ENCODE measurements at regions of chr6 and their contacts with region 1.

Region 1: GRCh38 chr6:139375232-139376016 is 976 bp upstream of the CITED2 start:
- DNase-seq: peak; percentile 71 to 93 (median 83)
- ATAC-seq: peak; percentile 63
- H3K4me3 ChIP-seq: peak overlapping the region; percentile 92 to 93
- H3K4me3 Mint-ChIP-seq: peak overlapping the region; percentile 98
- H3K27ac ChIP-seq: peak overlapping the region; percentile 76 to 94
- H3K27ac Mint-ChIP-seq: peak overlapping the region; percentile 95
- H3K4me1 ChIP-seq: peaks cover 22% of the 10 kb centered on the region
- H3K4me1 Mint-ChIP-seq: peaks cover 26% of the 10 kb centered on the region
- H3K27me3 ChIP-seq: no peaks in the 10 kb centered on the region
- H3K27me3 Mint-ChIP-seq: no peaks in the 10 kb centered on the region
- CTCF ChIP-seq: no peak

Region 2: DNA sequence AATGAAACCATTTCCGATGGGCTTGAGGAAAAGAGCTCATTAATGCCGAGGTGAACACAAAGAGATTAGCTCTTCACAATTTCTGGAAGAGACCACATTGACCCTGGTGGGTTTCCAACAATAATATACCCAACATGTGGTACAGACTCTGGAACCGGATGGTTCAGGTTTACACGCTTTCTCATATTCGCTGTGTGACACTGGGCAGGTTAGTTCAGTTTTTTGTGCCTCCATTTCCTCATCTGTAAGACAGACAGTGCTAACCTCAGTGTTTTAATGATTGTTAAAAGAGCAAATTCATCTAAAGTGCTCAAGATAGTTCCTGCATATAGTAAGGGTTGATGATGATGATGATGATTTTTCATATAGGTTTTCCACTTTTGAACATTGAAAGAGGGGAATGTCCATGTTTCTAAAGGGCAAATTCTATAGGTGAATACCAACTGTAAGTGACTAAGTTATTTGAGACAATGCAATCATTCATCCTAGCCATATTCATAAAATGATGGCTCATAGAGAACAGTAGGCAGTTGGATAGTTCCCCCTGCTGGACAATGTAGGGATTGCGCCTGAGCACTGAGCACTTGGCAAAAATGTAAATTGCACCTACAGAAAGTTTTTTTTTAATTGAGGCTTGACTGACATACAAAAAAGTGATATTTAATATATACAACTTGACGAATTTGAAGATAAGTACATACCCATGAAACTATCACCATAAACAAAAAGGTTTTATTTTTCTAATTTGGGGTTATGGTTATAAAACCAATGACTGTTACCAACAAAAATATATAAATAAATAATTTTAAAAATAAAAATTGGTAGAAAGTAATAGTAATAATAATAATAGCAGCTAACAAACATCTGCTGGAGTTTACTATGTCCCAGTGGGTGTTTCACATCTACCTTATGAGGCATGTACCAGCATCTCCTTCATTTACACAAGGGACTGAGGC is 1266.1 kb before region 1 on chr6:
- CTCF ChIA-PET with region 1: no interaction called
- POLR2A ChIA-PET with region 1: no interaction called
- intact Hi-C with region 1: loop called in 1 of 2 experiments (anchors 10 kb)
- DNase-seq: peak; percentile 61 to 85 (median 81)
- ATAC-seq: peak; percentile 71
- H3K4me3 ChIP-seq: no peak overlapping the region
- H3K4me3 Mint-ChIP-seq: no peak overlapping the region
- H3K27ac ChIP-seq: no peak overlapping the region
- H3K27ac Mint-ChIP-seq: no peak overlapping the region
- H3K4me1 ChIP-seq: peaks cover 9% of the 10 kb centered on the region
- H3K4me1 Mint-ChIP-seq: peaks cover 18% of the 10 kb centered on the region
- H3K27me3 ChIP-seq: peaks cover 5 to 7% of the 10 kb centered on the region in 2 experiments
- H3K27me3 Mint-ChIP-seq: peaks cover 25% of the 10 kb centered on the region
- CTCF ChIP-seq: peak; percentile 92

Region 3: GRCh38 chr6:139028658-139029469 is 346.6 kb before region 1 on chr6 and contains the start of gene ABRACL:
- CTCF ChIA-PET with region 1: interaction called, 3 read pairs
- POLR2A ChIA-PET with region 1: interaction called, 13 read pairs
- intact Hi-C with region 1: loop called (anchors 1 to 2 kb)
- DNase-seq: peak; percentile 38 to 89 (median 74)
- ATAC-seq: peak; percentile 88
- H3K4me3 ChIP-seq: peak within 1 kb of the TSS; percentile 93 to 99
- H3K4me3 Mint-ChIP-seq: no peak within 1 kb of the TSS
- H3K27ac ChIP-seq: peak within 1 kb of the TSS; percentile 86 to 90
- H3K27ac Mint-ChIP-seq: peak within 1 kb of the TSS; percentile 96
- H3K4me1 ChIP-seq: peaks cover 24% of the 10 kb centered on the region
- H3K4me1 Mint-ChIP-seq: peaks cover 31% of the 10 kb centered on the region
- H3K27me3 ChIP-seq: no peaks in the 10 kb centered on the region
- H3K27me3 Mint-ChIP-seq: no peaks in the 10 kb centered on the region
- CTCF ChIP-seq: no peak
- total RNA-seq, gene ABRACL: 30.4 to 30.5 TPM

Region 4: DNA sequence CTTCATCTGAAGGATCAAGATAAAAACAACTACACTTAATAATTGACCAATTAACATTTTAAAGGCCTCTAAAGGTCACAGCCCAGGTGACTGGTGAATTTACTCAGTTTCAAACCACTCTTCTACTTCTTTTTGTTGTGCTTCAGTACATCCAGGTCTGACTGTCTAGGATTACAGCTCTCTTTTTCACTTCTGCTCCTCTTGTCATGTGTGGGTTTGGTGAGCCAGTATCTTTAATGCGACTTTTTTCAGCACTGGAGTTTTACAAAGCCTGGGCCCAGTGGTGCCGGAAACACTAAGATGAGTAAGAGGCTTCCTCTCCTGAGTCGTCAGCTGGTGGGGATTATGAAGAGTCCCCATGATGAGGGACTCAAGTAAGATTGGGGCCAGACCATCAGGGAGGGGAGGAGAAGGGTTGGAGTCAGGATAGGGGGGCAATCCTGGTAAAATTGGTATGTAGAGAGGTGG is 213.6 kb before region 1 on chr6:
- CTCF ChIA-PET with region 1: interaction called, 3 read pairs
- POLR2A ChIA-PET with region 1: interaction called, 13 read pairs
- intact Hi-C with region 1: loop called in 1 of 2 experiments (anchors 1 kb)
- DNase-seq: peak in 8 of 9 experiments; percentile 48 to 85 (median 71)
- ATAC-seq: peak; percentile 60
- H3K4me3 ChIP-seq: peak overlapping the region in 1 of 2 experiments; percentile 1
- H3K4me3 Mint-ChIP-seq: peak overlapping the region; percentile 70
- H3K27ac ChIP-seq: peak overlapping the region; percentile 52 to 68
- H3K27ac Mint-ChIP-seq: peak overlapping the region; percentile 93
- H3K4me1 ChIP-seq: peaks cover 86% of the 10 kb centered on the region
- H3K4me1 Mint-ChIP-seq: peaks cover 92% of the 10 kb centered on the region
- H3K27me3 ChIP-seq: no peaks in the 10 kb centered on the region
- H3K27me3 Mint-ChIP-seq: no peaks in the 10 kb centered on the region
- CTCF ChIP-seq: no peak

Region 5: DNA sequence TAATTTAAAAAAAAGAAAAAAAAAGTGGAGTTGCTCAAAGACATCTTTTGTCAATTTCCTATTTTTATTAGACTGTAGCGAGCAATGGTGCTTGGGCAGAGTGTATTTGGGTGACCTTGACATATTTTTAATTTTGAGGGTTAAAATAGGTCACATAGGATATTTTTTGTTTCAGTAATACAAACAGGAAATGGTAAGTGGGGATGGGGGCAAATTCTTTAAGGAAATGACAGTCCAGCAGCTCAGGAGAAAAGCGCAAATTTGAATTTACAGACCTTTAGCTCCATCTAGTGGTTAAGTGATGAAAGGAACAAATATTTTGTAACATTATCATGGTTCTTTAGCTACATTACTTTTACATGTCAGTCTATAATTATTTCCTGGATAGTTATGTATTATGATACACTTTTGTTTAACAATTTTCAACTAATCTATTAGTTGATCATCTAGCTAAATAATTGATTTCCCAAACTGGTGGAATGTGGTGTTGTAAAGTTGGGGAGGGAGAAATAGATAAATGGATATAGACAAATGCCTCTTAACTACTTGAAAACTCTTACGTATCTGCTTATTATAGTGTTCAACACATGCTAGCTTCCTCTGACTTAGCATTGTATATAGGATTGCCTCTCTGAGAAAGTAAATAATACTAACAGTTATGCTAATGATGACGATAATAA is 11.0 kb before region 1 on chr6:
- CTCF ChIA-PET with region 1: interaction called, 31 read pairs
- POLR2A ChIA-PET with region 1: interaction called, 13 read pairs
- intact Hi-C with region 1: no loop called
- DNase-seq: peak in 2 of 9 experiments; percentile 64 to 74
- ATAC-seq: peak; percentile 63
- H3K4me3 ChIP-seq: no peak overlapping the region
- H3K4me3 Mint-ChIP-seq: no peak overlapping the region
- H3K27ac ChIP-seq: no peak overlapping the region
- H3K27ac Mint-ChIP-seq: no peak overlapping the region
- H3K4me1 ChIP-seq: peaks cover 4% of the 10 kb centered on the region
- H3K4me1 Mint-ChIP-seq: peaks cover 46% of the 10 kb centered on the region
- H3K27me3 ChIP-seq: no peaks in the 10 kb centered on the region
- H3K27me3 Mint-ChIP-seq: no peaks in the 10 kb centered on the region
- CTCF ChIP-seq: peak; percentile 97

Region 6: GRCh38 chr6:139625998-139626975 is 250.9 kb after region 1 on chr6:
- CTCF ChIA-PET with region 1: no interaction called
- POLR2A ChIA-PET with region 1: no interaction called
- intact Hi-C with region 1: loop called in 1 of 2 experiments (anchors 10 kb)
- DNase-seq: no peak
- ATAC-seq: no peak
- H3K4me3 ChIP-seq: no peak overlapping the region
- H3K4me3 Mint-ChIP-seq: no peak overlapping the region
- H3K27ac ChIP-seq: no peak overlapping the region
- H3K27ac Mint-ChIP-seq: no peak overlapping the region
- H3K4me1 ChIP-seq: no peaks in the 10 kb centered on the region
- H3K4me1 Mint-ChIP-seq: no peaks in the 10 kb centered on the region
- H3K27me3 ChIP-seq: no peaks in the 10 kb centered on the region
- H3K27me3 Mint-ChIP-seq: peaks cover 5% of the 10 kb centered on the region
- CTCF ChIP-seq: no peak

Region 7: GRCh38 chr6:140921366-140922226 is 1546.2 kb after region 1 on chr6:
- CTCF ChIA-PET with region 1: no interaction called
- POLR2A ChIA-PET with region 1: no interaction called
- intact Hi-C with region 1: loop called in 1 of 2 experiments (anchors 5 kb)
- DNase-seq: peak in 1 of 9 experiments; percentile 3
- ATAC-seq: no peak
- H3K4me3 ChIP-seq: no peak overlapping the region
- H3K4me3 Mint-ChIP-seq: no peak overlapping the region
- H3K27ac ChIP-seq: no peak overlapping the region
- H3K27ac Mint-ChIP-seq: no peak overlapping the region
- H3K4me1 ChIP-seq: no peaks in the 10 kb centered on the region
- H3K4me1 Mint-ChIP-seq: no peaks in the 10 kb centered on the region
- H3K27me3 ChIP-seq: no peaks in the 10 kb centered on the region
- H3K27me3 Mint-ChIP-seq: peaks cover 2% of the 10 kb centered on the region
- CTCF ChIP-seq: no peak